ENCODE measurements at regions of chr13 and their contacts with region 1.

Region 1: GRCh38 chr13:46160471-46161066 is 21.4 kb downstream of the LCP1 start:
- DNase-seq: peak; percentile 64
- ATAC-seq: peak; percentile 53
- H3K4me3 Mint-ChIP-seq: peak overlapping the region; percentile 71
- H3K27ac Mint-ChIP-seq: peak overlapping the region; percentile 91
- H3K4me1 Mint-ChIP-seq: peaks cover 63% of the 10 kb centered on the region
- H3K27me3 Mint-ChIP-seq: no peaks in the 10 kb centered on the region

Region 2: GRCh38 chr13:46143184-46143701 is 17.3 kb before region 1 on chr13:
- CTCF ChIA-PET with region 1: interaction called, 37 read pairs
- POLR2A ChIA-PET with region 1: interaction called, 4 read pairs
- DNase-seq: no peak
- ATAC-seq: no peak
- H3K4me3 Mint-ChIP-seq: no peak overlapping the region
- H3K27ac Mint-ChIP-seq: peak overlapping the region; percentile 22
- H3K4me1 Mint-ChIP-seq: peaks cover 8% of the 10 kb centered on the region
- H3K27me3 Mint-ChIP-seq: no peaks in the 10 kb centered on the region

Region 3: GRCh38 chr13:46176756-46177155 is 16.2 kb after region 1 on chr13:
- CTCF ChIA-PET with region 1: interaction called, 161 read pairs
- POLR2A ChIA-PET with region 1: interaction called, 172 read pairs
- DNase-seq: peak; percentile 56
- ATAC-seq: no peak
- H3K4me3 Mint-ChIP-seq: peak overlapping the region; percentile 90
- H3K27ac Mint-ChIP-seq: peak overlapping the region; percentile 83
- H3K4me1 Mint-ChIP-seq: peaks cover 54% of the 10 kb centered on the region
- H3K27me3 Mint-ChIP-seq: no peaks in the 10 kb centered on the region

Region 4: DNA sequence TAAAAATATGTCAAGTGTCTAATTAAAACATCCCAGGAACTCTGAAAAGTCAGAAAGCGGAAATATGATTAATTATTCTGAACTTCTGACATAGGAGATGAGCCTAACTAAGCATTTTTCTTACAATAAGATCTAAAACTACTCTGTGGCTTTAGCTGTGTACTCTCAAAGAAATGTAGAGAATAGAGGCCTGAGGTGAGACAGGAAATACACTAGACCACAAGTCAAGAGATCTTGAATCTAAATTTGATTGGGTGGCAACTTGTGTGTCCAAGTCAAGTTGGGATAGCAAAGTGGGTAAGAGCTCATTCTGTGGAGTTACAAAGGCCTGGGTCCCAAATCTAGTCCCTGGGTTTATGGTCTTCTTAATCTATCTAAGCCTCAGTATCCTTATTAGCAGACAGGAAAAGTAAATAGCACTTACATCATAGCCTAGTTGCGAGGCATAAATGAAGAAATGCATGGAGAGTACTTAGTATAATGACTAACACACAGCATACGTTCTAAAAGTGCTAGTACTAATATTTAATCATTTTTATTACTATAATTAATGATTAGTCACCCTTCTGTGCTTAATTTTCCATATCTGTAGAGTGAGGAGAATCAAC is 41.7 kb after region 1 on chr13:
- CTCF ChIA-PET with region 1: interaction called, 12 read pairs
- POLR2A ChIA-PET with region 1: no interaction called
- DNase-seq: peak; percentile 40
- ATAC-seq: peak; percentile 85
- H3K4me3 Mint-ChIP-seq: peak overlapping the region; percentile 47
- H3K27ac Mint-ChIP-seq: peak overlapping the region; percentile 89
- H3K4me1 Mint-ChIP-seq: peaks cover 60% of the 10 kb centered on the region
- H3K27me3 Mint-ChIP-seq: no peaks in the 10 kb centered on the region

Region 5: GRCh38 chr13:46295491-46296114 is 135.0 kb after region 1 on chr13:
- CTCF ChIA-PET with region 1: interaction called, 36 read pairs
- POLR2A ChIA-PET with region 1: interaction called, 3 read pairs
- DNase-seq: peak; percentile 83
- ATAC-seq: peak; percentile 92
- H3K4me3 Mint-ChIP-seq: peak overlapping the region; percentile 68
- H3K27ac Mint-ChIP-seq: peak overlapping the region; percentile 98
- H3K4me1 Mint-ChIP-seq: peaks cover 46% of the 10 kb centered on the region
- H3K27me3 Mint-ChIP-seq: no peaks in the 10 kb centered on the region

Measured in activated CD8-positive, alpha-beta T cell treated with anti-CD3 and anti-CD28 coated beads, Interleukin-2, amount 10 ng/mL, durations not matched to agents 7 days and 5 days (primary cell).